ENCODE measurements at regions of chr7 and their contacts with region 1.

Region 1: DNA sequence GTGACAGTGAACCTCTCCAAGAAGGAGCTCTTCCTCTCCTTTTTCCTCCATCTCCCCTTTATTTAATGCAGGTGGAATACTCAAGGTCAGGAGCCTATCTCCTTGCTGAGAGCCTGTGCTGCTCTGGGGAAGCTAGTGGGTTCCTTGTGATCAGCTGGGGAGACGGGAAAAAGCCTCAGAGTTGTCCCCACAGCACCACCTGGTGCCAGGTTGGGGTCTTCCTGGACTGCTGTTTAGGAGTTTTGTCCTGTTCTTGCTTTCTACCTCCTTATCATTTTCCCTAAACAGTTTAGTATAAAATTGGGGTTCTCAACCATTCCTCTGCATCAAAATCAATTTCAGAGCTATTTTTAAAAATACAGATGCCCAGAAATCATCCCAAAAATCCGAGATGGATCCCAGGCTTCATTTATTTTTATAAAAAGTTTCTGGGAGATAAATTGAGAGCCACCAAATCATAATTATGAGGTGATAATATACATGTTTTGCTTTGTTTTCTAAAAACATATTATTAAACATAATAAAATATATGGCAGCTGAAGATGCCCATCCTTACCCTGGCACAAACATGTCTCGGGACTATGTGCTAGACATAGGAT is 44.3 kb downstream of the MACC1 start:
- DNase-seq: peak; percentile 71
- H3K4me3 Mint-ChIP-seq: no peak overlapping the region
- H3K27ac Mint-ChIP-seq: no peak overlapping the region
- H3K4me1 Mint-ChIP-seq: no peaks in the 10 kb centered on the region
- H3K27me3 Mint-ChIP-seq: no peaks in the 10 kb centered on the region
- CTCF ChIP-seq: peak; percentile 60

Region 2: GRCh38 chr7:19713676-19714075 is 459.2 kb before region 1 on chr7:
- CTCF ChIA-PET with region 1: interaction called, 10 read pairs
- POLR2A ChIA-PET with region 1: no interaction called
- intact Hi-C with region 1: no loop called
- DNase-seq: peak; percentile 58
- H3K4me3 Mint-ChIP-seq: no peak overlapping the region
- H3K27ac Mint-ChIP-seq: no peak overlapping the region
- H3K4me1 Mint-ChIP-seq: peaks cover 16% of the 10 kb centered on the region
- H3K27me3 Mint-ChIP-seq: no peaks in the 10 kb centered on the region
- CTCF ChIP-seq: peak; percentile 47

Region 3: DNA sequence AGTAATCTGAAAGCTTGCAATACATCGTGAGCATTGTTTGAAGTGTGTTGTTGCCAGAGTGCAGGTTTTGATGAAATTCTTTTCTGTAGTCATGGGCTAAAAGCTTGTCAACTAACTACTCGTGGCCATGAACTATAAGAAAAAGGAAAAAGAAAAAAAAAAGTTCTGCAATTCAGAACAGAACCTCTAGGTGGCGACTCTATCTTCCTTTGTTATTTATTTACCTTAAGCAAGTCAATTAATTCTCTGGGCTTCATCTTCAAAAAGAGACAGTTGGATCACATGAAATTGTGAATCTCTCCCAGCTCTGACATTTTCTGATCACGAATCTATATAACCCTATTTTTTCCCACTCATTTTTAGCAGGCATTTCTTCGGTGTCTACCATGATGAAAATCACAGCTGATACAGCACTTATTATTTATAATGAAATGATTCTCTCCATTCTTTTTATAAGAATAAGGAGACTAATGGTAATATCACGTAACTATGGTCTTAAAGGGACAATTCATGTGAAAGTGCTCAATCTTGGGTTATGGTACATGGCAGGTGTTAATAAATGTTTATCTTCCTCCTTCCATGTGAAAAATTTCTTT is 418.2 kb before region 1 on chr7:
- CTCF ChIA-PET with region 1: interaction called, 35 read pairs
- POLR2A ChIA-PET with region 1: no interaction called
- intact Hi-C with region 1: loop called (anchors 1 kb)
- DNase-seq: peak; percentile 56
- H3K4me3 Mint-ChIP-seq: no peak overlapping the region
- H3K27ac Mint-ChIP-seq: no peak overlapping the region
- H3K4me1 Mint-ChIP-seq: peaks cover 6% of the 10 kb centered on the region
- H3K27me3 Mint-ChIP-seq: no peaks in the 10 kb centered on the region
- CTCF ChIP-seq: peak; percentile 53

Region 4: GRCh38 chr7:19982841-19983835 is 189.7 kb before region 1 on chr7:
- CTCF ChIA-PET with region 1: no interaction called
- POLR2A ChIA-PET with region 1: interaction called, 3 read pairs
- intact Hi-C with region 1: loop called (anchors 10 kb)
- DNase-seq: peak; percentile 57
- H3K4me3 Mint-ChIP-seq: no peak overlapping the region
- H3K27ac Mint-ChIP-seq: no peak overlapping the region
- H3K4me1 Mint-ChIP-seq: no peaks in the 10 kb centered on the region
- H3K27me3 Mint-ChIP-seq: no peaks in the 10 kb centered on the region
- CTCF ChIP-seq: peak; percentile 14

Region 5: GRCh38 chr7:20310963-20311742 is 138.3 kb after region 1 on chr7:
- CTCF ChIA-PET with region 1: interaction called, 20 read pairs
- POLR2A ChIA-PET with region 1: no interaction called
- intact Hi-C with region 1: loop called (anchors 2 kb)
- DNase-seq: peak; percentile 64
- H3K4me3 Mint-ChIP-seq: no peak overlapping the region
- H3K27ac Mint-ChIP-seq: no peak overlapping the region
- H3K4me1 Mint-ChIP-seq: peaks cover 12% of the 10 kb centered on the region
- H3K27me3 Mint-ChIP-seq: no peaks in the 10 kb centered on the region
- CTCF ChIP-seq: peak; percentile 65

Measured in MCF 10A (cell line).